AG04449 (cell line): ENCODE measurements at regions of chr10 and their contacts with region 1.

Region 1: DNA sequence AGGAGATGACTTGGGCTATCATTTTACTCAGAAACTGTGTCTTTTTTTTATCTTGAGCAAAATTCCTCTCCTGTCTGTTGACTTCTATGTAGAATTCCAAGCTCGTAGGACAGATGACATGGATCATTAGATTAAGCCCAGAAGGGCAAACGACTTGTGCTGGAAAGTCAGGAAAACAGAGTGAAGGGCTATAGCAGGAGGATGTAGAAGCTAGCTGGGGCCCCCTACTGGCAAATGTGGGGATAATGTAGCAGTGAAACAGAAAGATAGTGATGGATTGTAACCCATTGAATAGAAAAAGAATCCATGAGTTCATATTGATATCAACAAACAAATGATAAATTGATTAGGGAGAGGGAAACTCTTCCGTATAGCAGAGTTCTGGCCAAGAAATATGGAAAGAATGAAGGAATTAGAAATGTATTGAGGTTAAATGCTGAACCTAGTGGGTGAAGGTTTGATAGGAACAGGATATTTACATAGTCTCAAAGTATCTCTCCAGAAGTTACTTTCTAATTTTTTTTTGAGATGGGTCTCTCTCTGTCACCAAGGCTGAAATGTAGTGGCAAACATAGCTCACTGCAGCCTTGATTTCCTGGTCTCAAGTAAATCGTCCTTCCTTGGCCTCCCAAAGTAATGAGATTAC is 103.6 kb downstream of the LYZL1 start:
- DNase-seq: no peak
- H3K4me3 ChIP-seq: no peak overlapping the region
- CTCF ChIP-seq: peak; percentile 65

Region 2: DNA sequence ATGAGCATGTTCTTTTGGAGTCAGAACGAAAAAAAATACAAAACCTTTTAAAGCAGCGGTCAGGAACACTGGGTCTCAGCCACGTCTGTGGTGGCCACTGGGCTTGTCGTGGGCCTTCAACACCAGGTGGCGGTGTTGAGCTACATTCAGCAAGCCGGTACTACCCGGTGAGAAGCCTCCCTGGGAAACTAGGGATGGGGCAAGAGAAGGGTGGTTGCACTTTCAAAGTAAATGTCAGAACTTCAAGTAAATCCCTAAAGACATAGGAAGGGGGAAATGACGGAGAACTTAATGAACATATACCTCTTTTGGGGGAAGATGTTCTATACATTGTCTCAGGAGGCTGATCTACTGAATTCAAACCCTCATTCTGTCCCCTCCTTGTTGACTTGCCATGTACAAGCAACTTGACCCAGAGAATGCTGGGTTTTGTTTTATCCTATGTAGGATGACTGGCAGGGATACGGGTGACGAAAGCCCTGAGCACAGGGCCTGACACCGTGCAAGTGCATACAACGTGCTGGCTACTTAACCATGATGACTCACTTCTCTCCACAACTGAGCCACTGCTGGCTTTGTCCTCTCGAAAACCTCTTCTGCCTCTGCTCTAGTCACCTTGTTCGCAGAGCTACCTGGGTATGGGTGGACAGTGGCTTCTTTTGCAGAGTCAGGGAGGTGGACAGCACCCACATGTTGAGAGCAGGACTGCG is 764.2 kb before region 1 on chr10:
- CTCF ChIA-PET with region 1: interaction called, 14 read pairs
- POLR2A ChIA-PET with region 1: no interaction called
- DNase-seq: peak; percentile 19
- H3K4me3 ChIP-seq: no peak overlapping the region
- CTCF ChIP-seq: peak; percentile 91

Region 3: GRCh38 chr10:29377333-29377961 is 15.1 kb before region 1 on chr10:
- CTCF ChIA-PET with region 1: interaction called, 50 read pairs
- POLR2A ChIA-PET with region 1: no interaction called
- DNase-seq: no peak
- H3K4me3 ChIP-seq: no peak overlapping the region
- CTCF ChIP-seq: peak; percentile 43

Region 4: DNA sequence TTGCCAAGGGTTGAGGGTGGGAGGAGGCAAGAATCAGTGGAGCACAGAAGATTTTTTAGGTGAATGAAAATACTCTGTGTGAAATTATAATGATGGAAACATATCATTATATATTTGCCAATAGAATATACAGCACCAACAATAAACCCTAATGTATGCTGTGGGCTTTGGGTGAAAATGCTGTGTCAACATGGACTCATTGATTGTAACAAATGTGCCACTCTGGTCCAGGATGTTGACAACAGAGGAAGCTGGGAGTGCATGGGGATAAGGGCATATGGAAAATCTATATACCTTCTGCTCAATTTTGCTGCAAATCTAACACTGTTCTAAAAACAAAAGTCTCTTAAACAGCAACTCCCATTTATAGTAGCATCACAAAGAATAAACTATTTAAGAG is 10.7 kb after region 1 on chr10:
- CTCF ChIA-PET with region 1: interaction called, 76 read pairs
- POLR2A ChIA-PET with region 1: no interaction called
- DNase-seq: no peak
- H3K4me3 ChIP-seq: no peak overlapping the region
- CTCF ChIP-seq: no peak

Region 5: GRCh38 chr10:29409241-29410057 is 16.9 kb after region 1 on chr10:
- CTCF ChIA-PET with region 1: interaction called, 76 read pairs
- POLR2A ChIA-PET with region 1: no interaction called
- DNase-seq: no peak
- H3K4me3 ChIP-seq: peak overlapping the region; percentile 97
- CTCF ChIP-seq: no peak

Region 6: DNA sequence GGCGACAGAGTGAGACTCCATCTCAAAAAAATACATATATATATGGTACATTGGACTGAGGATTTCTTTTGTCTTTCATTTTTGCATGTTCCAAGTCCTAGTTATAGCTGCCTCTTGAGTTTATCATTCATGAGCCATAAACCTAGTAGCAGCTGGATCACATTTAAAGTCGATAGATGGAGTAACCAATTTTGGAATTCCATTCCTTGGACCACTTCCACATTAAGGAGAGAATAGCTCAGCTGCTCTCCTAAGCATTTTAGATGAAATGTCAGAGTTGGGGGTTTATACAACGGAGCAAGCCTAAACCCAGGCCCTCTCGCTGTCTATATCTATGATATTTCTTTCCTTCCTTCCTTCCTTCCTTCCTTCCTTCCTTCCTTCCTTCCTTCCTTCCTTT is 37.6 kb after region 1 on chr10:
- CTCF ChIA-PET with region 1: interaction called, 10 read pairs
- POLR2A ChIA-PET with region 1: no interaction called
- DNase-seq: no peak
- H3K4me3 ChIP-seq: no peak overlapping the region
- CTCF ChIP-seq: no peak

Region 7: GRCh38 chr10:29470355-29470705 is 77.8 kb after region 1 on chr10:
- CTCF ChIA-PET with region 1: interaction called, 10 read pairs
- POLR2A ChIA-PET with region 1: no interaction called
- DNase-seq: no peak
- H3K4me3 ChIP-seq: no peak overlapping the region
- CTCF ChIP-seq: peak; percentile 40